ENCODE measurements at regions of chr3 and their contacts with region 1.

Region 1: GRCh38 chr3:55169608-55170010 is 241.8 kb upstream of the LRTM1 start:
- H3K4me3 ChIP-seq: no peak overlapping the region
- H3K27ac ChIP-seq: no peak overlapping the region
- H3K4me1 ChIP-seq: no peaks in the 10 kb centered on the region
- CTCF ChIP-seq: no peak

Region 2: DNA sequence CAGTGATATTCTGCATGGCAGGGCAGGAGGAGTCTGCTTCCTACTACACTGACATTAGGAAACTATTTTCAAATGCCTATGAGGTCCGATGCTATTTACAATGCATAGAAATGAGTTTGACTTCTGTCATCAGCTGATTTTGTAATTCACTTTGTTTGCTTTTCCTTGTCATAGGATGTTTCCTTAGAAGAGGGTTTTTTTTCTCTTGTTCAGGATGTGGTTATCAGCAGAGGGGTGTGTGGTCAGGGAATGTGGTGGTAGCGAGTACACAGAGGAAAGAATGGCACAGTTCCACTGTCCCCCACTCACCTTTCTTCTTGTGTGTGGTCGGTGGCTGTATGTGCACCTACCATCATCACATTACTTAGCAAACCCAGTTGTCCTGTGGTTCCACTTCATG is 473.3 kb before region 1 on chr3:
- CTCF ChIA-PET with region 1: no interaction called
- POLR2A ChIA-PET with region 1: no interaction called
- H3K4me3 ChIP-seq: no peak overlapping the region
- H3K27ac ChIP-seq: no peak overlapping the region
- H3K4me1 ChIP-seq: no peaks in the 10 kb centered on the region
- CTCF ChIP-seq: no peak

Region 3: GRCh38 chr3:55122279-55122678 is 47.3 kb before region 1 on chr3:
- CTCF ChIA-PET with region 1: no interaction called
- POLR2A ChIA-PET with region 1: no interaction called
- H3K4me3 ChIP-seq: no peak overlapping the region
- H3K27ac ChIP-seq: no peak overlapping the region
- H3K4me1 ChIP-seq: no peaks in the 10 kb centered on the region
- CTCF ChIP-seq: no peak

Region 4: GRCh38 chr3:55180936-55181535 is 11.4 kb after region 1 on chr3:
- CTCF ChIA-PET with region 1: interaction called, 13 read pairs
- POLR2A ChIA-PET with region 1: no interaction called
- H3K4me3 ChIP-seq: no peak overlapping the region
- H3K27ac ChIP-seq: no peak overlapping the region
- H3K4me1 ChIP-seq: no peaks in the 10 kb centered on the region
- CTCF ChIP-seq: no peak